ENCODE measurements at regions of chr11 and their contacts with region 1.

Region 1: DNA sequence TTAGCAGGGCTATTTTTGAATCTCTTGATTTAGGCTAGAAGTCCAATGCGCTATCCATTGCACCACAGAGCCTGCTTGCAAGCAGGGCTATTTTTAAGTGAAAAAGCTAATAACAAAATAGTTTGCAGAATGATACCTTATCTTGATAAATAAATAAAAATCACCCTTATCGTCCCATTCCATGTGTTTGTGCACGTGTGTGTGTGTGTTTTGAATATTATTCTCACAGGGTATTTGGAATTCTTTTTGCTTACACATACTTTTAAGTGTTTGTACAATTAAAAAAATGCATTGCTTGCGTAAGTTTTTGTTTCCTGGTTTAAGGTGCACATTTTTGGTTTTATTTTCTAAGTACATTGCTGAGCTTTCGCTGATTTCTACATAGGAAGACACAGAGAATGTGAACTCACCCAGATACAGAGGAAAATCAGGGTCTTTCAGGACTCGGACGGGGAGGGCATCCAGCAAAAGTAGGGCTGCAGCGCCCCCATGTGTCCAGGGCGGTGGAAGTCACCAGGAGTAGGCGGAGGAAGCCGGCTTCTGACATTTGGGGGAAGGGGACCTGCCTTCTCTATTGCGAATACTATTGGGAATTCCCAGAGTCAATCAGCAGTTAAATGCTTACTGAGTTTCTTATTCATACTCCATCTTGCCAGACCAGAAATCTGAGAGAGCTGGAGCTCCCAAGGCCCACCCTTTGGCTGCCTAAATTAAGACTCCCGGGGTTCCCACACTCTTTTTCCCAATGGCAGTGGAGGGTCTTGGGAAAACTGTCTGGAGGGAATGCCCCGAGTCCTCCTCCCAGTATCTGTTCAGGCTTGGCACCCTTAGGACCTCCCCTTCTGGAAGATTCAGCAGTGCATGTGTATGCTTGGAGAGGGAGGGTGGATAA is 27.2 kb downstream of the SLC1A2 start:
- DNase-seq: peak; percentile 87
- ATAC-seq: peak; percentile 93 to 96

Region 2: DNA sequence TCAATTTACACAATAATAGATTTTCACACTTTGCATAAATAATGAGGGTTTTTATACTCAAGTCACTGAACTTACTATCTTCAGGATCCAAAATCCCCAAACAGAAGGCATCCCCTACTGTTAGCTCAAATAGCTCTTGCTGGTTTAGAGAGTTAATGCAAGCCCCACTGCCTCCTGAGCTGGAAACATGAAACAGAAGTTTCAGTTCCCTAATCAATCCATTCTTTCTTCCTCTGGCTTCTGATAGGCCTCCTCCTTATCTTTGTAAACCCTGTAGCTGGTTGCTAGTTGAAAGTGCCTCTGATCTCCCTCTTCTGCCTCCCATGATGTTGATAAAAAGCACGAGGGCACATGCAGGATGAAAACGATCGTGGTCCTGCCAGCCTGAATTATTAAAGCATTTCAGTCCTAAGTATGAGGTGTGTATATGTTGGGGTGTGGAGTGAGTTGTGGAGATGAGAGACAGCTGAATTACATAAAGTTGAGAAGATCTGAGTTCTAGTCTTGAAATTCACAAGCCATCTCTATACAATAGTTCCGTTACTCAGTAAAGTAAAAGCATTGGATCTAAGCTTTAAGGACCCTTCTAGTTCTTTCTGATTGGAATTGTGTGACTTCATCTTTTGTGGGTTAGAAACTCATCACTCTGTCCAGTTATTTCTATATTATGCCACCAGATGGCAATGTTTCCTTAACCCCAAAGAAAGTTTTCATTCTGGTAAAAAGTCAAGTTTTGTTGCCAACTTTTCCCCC is 806.3 kb before region 1 on chr11:
- intact Hi-C with region 1: loop called (anchors 5 to 10 kb)
- DNase-seq: no peak
- ATAC-seq: peak; percentile 45 to 50

Region 3: GRCh38 chr11:34926101-34926830 is 465.9 kb before region 1 on chr11:
- intact Hi-C with region 1: loop called (anchors 2 to 10 kb)
- DNase-seq: no peak
- ATAC-seq: peak; percentile 72

Region 4: GRCh38 chr11:34997952-34998528 is 394.1 kb before region 1 on chr11:
- intact Hi-C with region 1: loop called in 1 of 2 experiments (anchors 5 kb)
- DNase-seq: no peak
- ATAC-seq: peak in 1 of 2 donors; percentile 23

Region 5: GRCh38 chr11:35013514-35014233 is 378.5 kb before region 1 on chr11:
- intact Hi-C with region 1: no loop called
- DNase-seq: no peak
- ATAC-seq: peak in 1 of 2 donors; percentile 26